Calu3 (cell line): ENCODE measurements at regions of chr19 and their contacts with region 1.

Region 1: GRCh38 chr19:3116255-3116602 is 19.6 kb upstream of the GNA15 start:
- DNase-seq: no peak
- H3K4me3 Mint-ChIP-seq: no peak overlapping the region
- H3K27ac Mint-ChIP-seq: no peak overlapping the region
- H3K4me1 Mint-ChIP-seq: no peaks in the 10 kb centered on the region
- H3K27me3 Mint-ChIP-seq: no peaks in the 10 kb centered on the region
- CTCF ChIP-seq: no peak

Region 2: DNA sequence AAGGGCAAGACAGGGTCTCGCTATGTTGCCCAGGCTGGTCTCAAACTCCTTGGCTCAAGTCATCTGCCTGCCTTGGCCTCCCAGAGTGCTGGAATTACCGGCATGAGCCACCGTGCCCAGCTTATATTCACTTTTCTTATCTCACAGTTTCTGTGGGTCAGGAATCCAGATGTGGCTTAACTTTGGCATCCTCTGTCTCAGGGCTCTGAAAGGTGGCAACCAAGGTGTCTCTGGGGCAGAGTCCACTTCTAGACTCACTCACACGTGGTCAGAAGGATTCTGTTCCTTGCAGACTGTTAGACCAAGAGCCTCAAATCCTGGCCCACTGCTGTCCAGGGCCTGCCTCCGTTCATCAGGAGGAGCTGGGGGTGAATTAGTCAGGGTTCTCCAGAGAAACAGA is 651.8 kb before region 1 on chr19:
- CTCF ChIA-PET with region 1: interaction called, 13 read pairs
- intact Hi-C with region 1: no loop called
- DNase-seq: no peak
- H3K4me3 Mint-ChIP-seq: no peak overlapping the region
- H3K27ac Mint-ChIP-seq: peak overlapping the region; percentile 39
- H3K4me1 Mint-ChIP-seq: peaks cover 1% of the 10 kb centered on the region
- H3K27me3 Mint-ChIP-seq: no peaks in the 10 kb centered on the region
- CTCF ChIP-seq: no peak